ENCODE measurements at regions of chr1 and their contacts with region 1.

Region 1: GRCh38 chr1:169348383-169349036 is 19.1 kb downstream of the NME7 start:
- DNase-seq: peak; percentile 73 to 86 (median 82)
- H3K4me3 ChIP-seq: no peak overlapping the region
- H3K27ac ChIP-seq: no peak overlapping the region
- H3K4me1 ChIP-seq: peaks cover 0 to 8% (median under 1%) of the 10 kb centered on the region in 4 experiments
- H3K27me3 ChIP-seq: no peaks in the 10 kb centered on the region

Region 2: DNA sequence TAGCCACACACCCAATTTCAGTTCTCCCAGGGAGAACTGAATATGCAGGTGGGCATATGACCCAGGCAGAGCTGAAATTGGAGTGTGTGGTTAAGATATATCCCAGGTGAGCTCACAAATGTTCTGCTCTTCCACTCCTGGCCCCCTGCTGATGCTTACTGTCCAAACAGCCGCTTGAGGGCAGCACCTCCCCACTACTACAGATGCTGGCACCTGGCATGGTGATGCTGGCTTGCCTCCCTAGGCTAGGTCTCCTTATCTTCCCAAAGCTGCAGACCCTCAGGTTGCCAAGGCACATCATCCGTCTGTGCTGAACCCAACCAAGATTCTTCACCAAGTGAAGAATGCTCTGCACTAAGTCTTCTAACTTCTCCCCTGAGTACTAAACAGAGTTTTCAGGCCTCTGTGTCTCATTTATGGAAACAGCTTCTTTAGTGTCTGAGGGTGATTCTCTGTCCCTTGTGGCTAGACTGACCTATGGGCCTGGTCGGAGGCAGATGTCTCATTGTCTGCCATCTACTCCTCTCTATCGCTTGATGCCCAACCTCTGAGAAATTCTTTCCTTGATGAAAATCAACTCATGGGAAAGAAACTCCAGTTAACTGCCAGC is 744.9 kb before region 1 on chr1:
- CTCF ChIA-PET with region 1: interaction called, 59 read pairs
- POLR2A ChIA-PET with region 1: no interaction called
- DNase-seq: peak; percentile 68 to 81 (median 76)
- H3K4me3 ChIP-seq: no peak overlapping the region
- H3K27ac ChIP-seq: no peak overlapping the region
- H3K4me1 ChIP-seq: no peaks in the 10 kb centered on the region
- H3K27me3 ChIP-seq: no peaks in the 10 kb centered on the region

Region 3: GRCh38 chr1:169110689-169111447 is 237.6 kb before region 1 on chr1:
- CTCF ChIA-PET with region 1: interaction called, 13 read pairs
- POLR2A ChIA-PET with region 1: interaction called, 4 read pairs
- DNase-seq: peak in 1 of 3 donors; percentile 20
- H3K4me3 ChIP-seq: peak overlapping the region in 6 of 7 experiments; percentile 28 to 92 (median 86)
- H3K27ac ChIP-seq: peak overlapping the region; percentile 65 to 80
- H3K4me1 ChIP-seq: peaks cover 26 to 62% (median 51%) of the 10 kb centered on the region in 4 experiments
- H3K27me3 ChIP-seq: no peaks in the 10 kb centered on the region

Region 4: DNA sequence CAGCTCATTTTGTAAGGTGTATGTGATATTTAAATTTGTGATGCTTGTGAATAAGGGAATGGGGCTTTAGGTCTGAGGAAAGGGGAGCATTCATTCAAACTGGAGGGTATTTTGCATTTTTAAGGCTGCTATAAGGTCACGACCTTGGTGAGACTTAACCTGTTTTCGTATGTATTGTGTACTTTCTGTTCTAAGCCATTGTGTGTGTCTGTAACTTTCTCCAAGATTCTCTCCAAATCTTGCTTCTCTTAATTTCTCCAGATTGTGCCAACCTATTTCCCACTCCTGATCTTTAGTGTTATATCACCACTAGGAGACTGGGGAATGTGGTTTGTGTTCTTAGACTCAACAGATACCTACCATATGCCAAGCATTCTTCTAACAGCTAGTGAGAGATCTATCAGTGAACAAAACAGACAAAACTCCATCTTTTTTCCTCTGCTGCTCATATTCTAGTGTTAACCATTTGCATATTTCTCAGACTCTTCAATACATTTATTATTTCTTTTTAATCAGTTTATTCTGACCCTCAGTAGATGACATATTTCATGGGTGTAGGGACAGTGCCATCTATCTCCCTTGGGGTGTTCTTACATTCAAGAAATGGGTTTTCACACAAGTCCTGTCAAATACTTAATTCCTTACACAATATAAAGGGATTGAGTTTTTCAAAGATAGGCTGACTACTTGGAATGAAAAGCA is 214.6 kb before region 1 on chr1:
- CTCF ChIA-PET with region 1: interaction called, 11 read pairs
- POLR2A ChIA-PET with region 1: no interaction called
- DNase-seq: peak in 2 of 3 donors; percentile 5 to 23
- H3K4me3 ChIP-seq: no peak overlapping the region
- H3K27ac ChIP-seq: no peak overlapping the region
- H3K4me1 ChIP-seq: no peaks in the 10 kb centered on the region
- H3K27me3 ChIP-seq: no peaks in the 10 kb centered on the region

Region 5: DNA sequence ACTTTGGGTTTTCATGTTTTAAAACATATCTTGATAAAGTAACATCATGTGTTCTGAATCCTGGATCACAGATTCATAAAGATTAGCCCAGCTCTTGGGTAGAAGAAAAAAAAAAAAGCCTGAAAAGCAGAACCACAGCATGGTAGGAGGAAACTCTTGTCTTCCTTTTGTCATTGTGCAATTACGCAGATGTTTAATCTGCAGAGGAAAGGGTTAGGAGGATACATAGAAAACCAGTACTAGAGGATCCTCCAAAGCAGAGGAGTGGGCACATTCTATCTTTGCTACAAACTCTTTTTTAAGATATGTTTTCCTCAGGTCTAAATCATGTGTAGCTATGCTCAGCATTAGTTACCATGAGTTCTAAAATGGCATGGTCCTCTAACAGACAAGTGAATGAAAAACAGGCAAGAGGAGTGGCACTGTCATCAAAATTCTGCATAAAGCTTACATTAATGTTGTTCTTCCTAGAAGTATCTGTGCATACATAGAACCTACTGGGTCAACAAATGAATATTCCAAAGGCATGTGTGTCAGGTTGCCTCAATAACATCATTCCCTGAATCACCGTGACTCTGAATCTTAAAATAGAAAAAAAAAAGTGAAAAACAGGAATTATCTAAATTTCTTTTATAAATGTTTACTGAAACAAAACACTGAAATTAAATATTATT is 87.9 kb before region 1 on chr1:
- CTCF ChIA-PET with region 1: interaction called, 11 read pairs
- POLR2A ChIA-PET with region 1: interaction called, 3 read pairs
- DNase-seq: peak in 1 of 3 donors; percentile 94
- H3K4me3 ChIP-seq: peak overlapping the region in 2 of 7 experiments; percentile 22 to 39
- H3K27ac ChIP-seq: no peak overlapping the region
- H3K4me1 ChIP-seq: peaks cover 0 to 29% (median 9%) of the 10 kb centered on the region in 4 experiments
- H3K27me3 ChIP-seq: no peaks in the 10 kb centered on the region

Region 6: GRCh38 chr1:169298441-169298840 is 50.1 kb before region 1 on chr1:
- CTCF ChIA-PET with region 1: no interaction called
- POLR2A ChIA-PET with region 1: no interaction called
- DNase-seq: no peak
- H3K4me3 ChIP-seq: no peak overlapping the region
- H3K27ac ChIP-seq: no peak overlapping the region
- H3K4me1 ChIP-seq: peaks cover 17 to 54% (median 27%) of the 10 kb centered on the region in 4 experiments
- H3K27me3 ChIP-seq: no peaks in the 10 kb centered on the region

Region 7: GRCh38 chr1:169361281-169361680 is 12.8 kb after region 1 on chr1:
- CTCF ChIA-PET with region 1: interaction called, 17 read pairs
- POLR2A ChIA-PET with region 1: no interaction called
- DNase-seq: no peak
- H3K4me3 ChIP-seq: no peak overlapping the region
- H3K27ac ChIP-seq: no peak overlapping the region
- H3K4me1 ChIP-seq: no peaks in the 10 kb centered on the region
- H3K27me3 ChIP-seq: no peaks in the 10 kb centered on the region

Region 8: GRCh38 chr1:169387383-169387782 is 38.9 kb after region 1 on chr1:
- CTCF ChIA-PET with region 1: no interaction called
- POLR2A ChIA-PET with region 1: no interaction called
- DNase-seq: no peak
- H3K4me3 ChIP-seq: no peak overlapping the region
- H3K27ac ChIP-seq: no peak overlapping the region
- H3K4me1 ChIP-seq: no peaks in the 10 kb centered on the region
- H3K27me3 ChIP-seq: no peaks in the 10 kb centered on the region

Region 9: DNA sequence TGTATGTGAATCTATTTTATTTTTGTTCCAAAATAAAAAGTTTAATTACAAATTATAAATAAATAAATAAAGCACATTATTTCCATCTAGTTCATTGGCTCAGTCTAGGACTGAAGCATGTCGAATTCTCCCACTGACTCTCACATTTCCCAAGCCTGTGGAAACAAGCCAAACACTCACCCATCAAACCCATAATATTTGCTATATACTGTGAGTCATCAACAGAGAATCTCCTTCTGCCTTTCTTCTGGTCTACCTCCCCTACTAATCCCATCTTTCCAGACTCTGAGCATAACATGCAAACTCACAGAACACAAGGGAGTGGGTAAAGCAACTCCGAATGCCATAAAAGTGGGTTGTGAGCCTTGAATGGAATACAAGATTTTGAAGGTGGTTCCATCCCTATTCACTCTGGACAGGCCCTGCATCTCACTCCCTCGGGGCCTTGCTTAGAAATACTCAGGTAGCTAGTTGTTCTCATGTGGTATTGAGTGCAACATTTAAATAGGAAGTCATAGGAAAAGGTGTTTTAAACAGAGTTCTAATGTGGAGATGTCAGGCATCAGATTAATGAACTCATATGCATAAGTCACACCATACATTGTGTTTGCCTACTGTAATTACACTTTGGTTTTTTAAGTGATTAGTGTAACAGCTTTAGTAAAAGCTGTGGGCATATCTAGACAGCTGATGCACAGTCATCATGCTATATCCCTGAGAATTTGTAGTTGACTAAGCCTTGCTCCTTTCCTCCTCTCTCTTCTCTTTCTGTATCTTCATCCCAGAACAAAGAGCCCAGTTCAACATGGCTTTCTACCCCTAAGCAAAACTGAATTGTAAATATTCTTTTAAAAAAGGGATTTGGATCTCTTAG is 190.7 kb after region 1 on chr1:
- CTCF ChIA-PET with region 1: no interaction called
- POLR2A ChIA-PET with region 1: no interaction called
- DNase-seq: no peak
- H3K4me3 ChIP-seq: no peak overlapping the region
- H3K27ac ChIP-seq: no peak overlapping the region
- H3K4me1 ChIP-seq: no peaks in the 10 kb centered on the region
- H3K27me3 ChIP-seq: no peaks in the 10 kb centered on the region